Endothelial cell of umbilical vein (primary cell): ENCODE measurements at regions of chr10 and their contacts with region 1.

Region 1: DNA sequence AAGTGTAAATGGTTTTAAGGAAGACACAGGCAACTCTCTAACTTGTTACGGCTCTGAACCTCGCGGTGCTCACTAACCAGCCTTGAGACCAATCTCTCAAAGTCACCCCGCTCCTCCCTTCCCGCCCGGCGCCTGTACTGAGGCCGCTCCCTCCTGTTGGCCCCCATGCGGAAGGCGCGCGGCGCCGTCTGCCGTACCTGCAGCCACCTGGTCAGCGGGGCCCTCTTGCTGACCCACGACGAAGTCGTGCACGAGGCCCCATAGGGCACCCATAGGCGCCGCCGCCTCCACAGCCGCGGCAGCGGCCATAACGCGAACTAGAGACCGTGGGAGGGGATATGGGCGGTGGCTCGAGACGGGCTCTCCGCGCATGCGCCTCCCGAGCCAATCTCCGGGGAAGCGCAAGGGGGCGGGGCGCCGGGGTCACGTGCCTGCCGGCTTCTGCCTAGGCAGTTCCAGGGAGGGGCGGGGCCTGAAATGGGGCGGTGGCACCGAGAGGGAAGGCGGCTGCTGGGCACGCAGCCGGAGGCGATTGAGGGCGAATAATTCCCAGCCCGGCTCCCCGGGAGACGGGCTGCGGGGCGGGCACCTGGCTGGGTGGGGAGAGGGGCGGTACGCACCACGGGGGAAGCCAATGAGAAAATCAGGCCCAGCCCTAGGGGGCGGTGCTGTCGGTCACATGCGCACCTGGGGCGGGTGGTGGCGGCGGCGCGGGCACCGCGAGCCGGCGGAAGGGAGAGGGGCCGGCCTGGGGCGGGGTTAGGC is at the start of gene MMS19:
- DNase-seq: peak; percentile 99
- H3K4me3 ChIP-seq: peak within 1 kb of the TSS; percentile 70 to 93 (median 81)
- H3K27ac ChIP-seq: peak within 1 kb of the TSS; percentile 40
- H3K4me1 ChIP-seq: peaks cover 33% of the 10 kb centered on the region
- H3K27me3 ChIP-seq: no peaks in the 10 kb centered on the region
- CTCF ChIP-seq: no peak
- POLR2A ChIP-seq: peak; percentile 69
- total RNA-seq, gene MMS19: 80.9 and 95.2 TPM in 2 replicates

Region 2: GRCh38 chr10:97425964-97426775 is 72.1 kb before region 1 on chr10 and contains the start of gene PGAM1:
- CTCF ChIA-PET with region 1: no interaction called
- POLR2A ChIA-PET with region 1: no interaction called
- dilution Hi-C with region 1: no loop called
- intact Hi-C with region 1: loop called (anchors 5 kb)
- DNase-seq: peak; percentile 99
- H3K4me3 ChIP-seq: peak within 1 kb of the TSS; percentile 76 to 95 (median 86)
- H3K27ac ChIP-seq: peak within 1 kb of the TSS; percentile 79
- H3K4me1 ChIP-seq: peaks cover 27% of the 10 kb centered on the region
- H3K27me3 ChIP-seq: no peaks in the 10 kb centered on the region
- CTCF ChIP-seq: peak; percentile 66 to 91
- POLR2A ChIP-seq: no peak
- total RNA-seq, gene PGAM1: 357 and 375 TPM in 2 replicates

Region 3: DNA sequence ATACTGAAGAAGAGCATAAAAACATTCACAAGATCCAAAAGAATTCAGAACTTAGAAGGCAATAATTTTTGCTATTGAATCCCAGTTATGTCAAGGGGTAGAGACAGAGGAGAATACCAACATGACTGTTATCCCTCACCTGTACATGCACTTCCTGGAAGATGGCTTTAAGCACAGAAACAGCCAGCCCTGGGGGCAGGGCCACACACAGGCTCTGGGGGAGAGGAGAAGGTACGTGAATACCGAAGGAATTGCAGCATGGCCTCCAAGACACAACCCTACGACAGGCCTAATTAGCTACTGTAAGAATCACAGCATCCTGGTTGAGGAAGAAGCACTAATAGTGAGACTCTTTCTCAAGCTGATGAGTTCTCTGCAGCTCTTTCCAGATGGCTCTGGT is 20.5 kb before region 1 on chr10:
- CTCF ChIA-PET with region 1: no interaction called
- POLR2A ChIA-PET with region 1: no interaction called
- dilution Hi-C with region 1: no loop called
- intact Hi-C with region 1: no loop called
- DNase-seq: no peak
- H3K4me3 ChIP-seq: no peak overlapping the region
- H3K27ac ChIP-seq: no peak overlapping the region
- H3K4me1 ChIP-seq: no peaks in the 10 kb centered on the region
- H3K27me3 ChIP-seq: no peaks in the 10 kb centered on the region
- CTCF ChIP-seq: no peak
- POLR2A ChIP-seq: no peak

Region 4: GRCh38 chr10:97518301-97519043 is 20.2 kb after region 1 on chr10:
- CTCF ChIA-PET with region 1: interaction called, 10 read pairs
- POLR2A ChIA-PET with region 1: interaction called, 3 read pairs
- dilution Hi-C with region 1: no loop called
- intact Hi-C with region 1: loop called (anchors 1 kb)
- DNase-seq: peak; percentile 64
- H3K4me3 ChIP-seq: no peak overlapping the region
- H3K27ac ChIP-seq: peak overlapping the region; percentile 56
- H3K4me1 ChIP-seq: peaks cover 28% of the 10 kb centered on the region
- H3K27me3 ChIP-seq: no peaks in the 10 kb centered on the region
- CTCF ChIP-seq: no peak
- POLR2A ChIP-seq: no peak

Region 5: GRCh38 chr10:97543025-97543575 is 44.8 kb after region 1 on chr10:
- CTCF ChIA-PET with region 1: interaction called, 13 read pairs
- POLR2A ChIA-PET with region 1: interaction called, 8 read pairs
- dilution Hi-C with region 1: no loop called
- intact Hi-C with region 1: loop called (anchors 1 kb)
- DNase-seq: peak; percentile 98
- H3K4me3 ChIP-seq: no peak overlapping the region
- H3K27ac ChIP-seq: peak overlapping the region; percentile 99
- H3K4me1 ChIP-seq: peaks cover 61% of the 10 kb centered on the region
- H3K27me3 ChIP-seq: no peaks in the 10 kb centered on the region
- CTCF ChIP-seq: no peak
- POLR2A ChIP-seq: peak; percentile 80

Region 6: GRCh38 chr10:97686962-97687784 is 188.9 kb after region 1 on chr10 and contains the start of gene AVPI1:
- CTCF ChIA-PET with region 1: no interaction called
- POLR2A ChIA-PET with region 1: no interaction called
- dilution Hi-C with region 1: no loop called
- intact Hi-C with region 1: loop called (anchors 1 kb)
- DNase-seq: peak; percentile 98
- H3K4me3 ChIP-seq: peak within 1 kb of the TSS; percentile 41 to 62 (median 60)
- H3K27ac ChIP-seq: peak within 1 kb of the TSS; percentile 42
- H3K4me1 ChIP-seq: peaks cover 16% of the 10 kb centered on the region
- H3K27me3 ChIP-seq: no peaks in the 10 kb centered on the region
- CTCF ChIP-seq: no peak
- POLR2A ChIP-seq: peak; percentile 68
- total RNA-seq, gene AVPI1: 2.4 and 3.0 TPM in 2 replicates